Ovary (tissue), 10 donors: ENCODE measurements at regions of chr5 and their contacts with region 1.

Region 1: GRCh38 chr5:42228279-42228678 is 195.0 kb upstream of the GHR start:
- DNase-seq: no peak
- H3K4me3 ChIP-seq: no peak overlapping the region
- H3K27ac ChIP-seq: no peak overlapping the region
- H3K4me1 ChIP-seq: no peaks in the 10 kb centered on the region
- H3K27me3 ChIP-seq: no peaks in the 10 kb centered on the region
- CTCF ChIP-seq: no peak
- EP300 ChIP-seq: no peak
- POLR2A ChIP-seq: no peak

Region 2: DNA sequence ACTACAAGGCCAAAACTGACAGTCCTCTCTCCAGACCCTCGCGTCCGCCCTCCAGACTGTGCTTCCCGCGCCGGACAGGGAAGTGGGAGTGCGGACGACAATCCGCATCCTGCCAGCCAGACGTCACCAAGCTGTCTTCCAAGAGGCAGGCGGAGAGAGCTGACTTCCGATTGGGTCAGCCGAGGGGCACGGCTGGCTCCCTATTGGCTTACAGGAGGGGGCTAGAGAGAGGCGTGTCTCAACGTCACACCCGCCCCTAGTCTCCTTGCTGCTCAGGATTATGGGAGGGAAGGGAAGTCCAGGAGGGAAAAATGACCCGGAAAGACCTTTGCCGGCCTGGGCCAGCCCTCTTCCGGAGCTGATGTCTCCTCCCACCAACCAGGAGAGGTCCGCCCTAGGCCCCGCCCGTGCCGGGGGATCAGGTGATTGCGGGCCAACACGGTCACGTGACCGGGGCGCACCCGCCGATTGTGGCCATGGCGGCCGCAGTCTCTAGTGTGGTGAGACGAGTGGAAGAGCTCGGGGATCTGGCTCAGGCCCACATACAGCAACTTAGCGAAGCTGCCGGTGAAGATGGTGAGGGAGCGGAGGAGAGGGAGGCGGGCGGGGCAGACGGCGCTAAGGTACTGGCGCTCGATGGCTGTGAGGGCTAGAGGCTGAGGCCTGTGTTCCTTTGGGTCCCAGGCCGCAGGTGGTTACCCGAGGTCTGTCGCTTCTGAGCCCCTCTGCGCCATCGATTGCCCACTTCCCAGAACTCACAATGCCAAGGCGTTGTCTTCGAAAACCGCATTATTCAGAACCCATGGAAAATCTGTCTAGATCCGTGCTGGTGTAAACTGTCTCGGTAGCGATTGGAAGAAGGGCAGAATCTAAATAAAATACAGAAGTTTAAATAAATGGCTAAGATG is 324.1 kb before region 1 on chr5 and contains the start of gene RIMOC1:
- intact Hi-C with region 1: no loop called
- DNase-seq: peak; percentile 98 to 99 (median 98)
- H3K4me3 ChIP-seq: peak within 1 kb of the TSS; percentile 86
- H3K27ac ChIP-seq: peak within 1 kb of the TSS; percentile 84 to 94
- H3K4me1 ChIP-seq: peaks cover 2% of the 10 kb centered on the region
- H3K27me3 ChIP-seq: no peaks in the 10 kb centered on the region
- CTCF ChIP-seq: no peak
- EP300 ChIP-seq: no peak
- POLR2A ChIP-seq: peak; percentile 94
- total RNA-seq, gene RIMOC1: 12.2 to 35.7 (median 25.9) TPM

Region 3: DNA sequence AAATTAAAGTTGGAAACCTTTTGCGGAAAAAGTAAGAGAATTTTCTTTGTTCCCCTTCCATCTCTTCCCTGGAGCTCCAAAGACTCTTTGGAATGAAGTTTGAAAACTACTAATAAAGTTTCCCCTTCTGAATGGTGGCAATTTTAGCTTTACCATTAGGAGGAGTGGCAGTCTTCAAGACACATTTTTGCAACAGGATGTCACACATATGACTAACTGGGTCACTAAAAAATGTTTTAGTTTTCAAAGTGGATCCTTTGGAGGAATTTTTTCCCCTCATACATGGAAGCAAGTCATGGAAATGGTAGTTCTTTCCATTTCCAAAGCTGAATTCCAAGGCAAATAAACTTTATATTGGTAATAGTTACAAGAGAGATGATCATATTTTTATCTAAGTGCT is 287.6 kb before region 1 on chr5:
- intact Hi-C with region 1: no loop called
- DNase-seq: no peak
- H3K4me3 ChIP-seq: no peak overlapping the region
- H3K27ac ChIP-seq: no peak overlapping the region
- H3K4me1 ChIP-seq: no peaks in the 10 kb centered on the region
- H3K27me3 ChIP-seq: no peaks in the 10 kb centered on the region
- CTCF ChIP-seq: no peak
- EP300 ChIP-seq: no peak
- POLR2A ChIP-seq: no peak

Region 4: DNA sequence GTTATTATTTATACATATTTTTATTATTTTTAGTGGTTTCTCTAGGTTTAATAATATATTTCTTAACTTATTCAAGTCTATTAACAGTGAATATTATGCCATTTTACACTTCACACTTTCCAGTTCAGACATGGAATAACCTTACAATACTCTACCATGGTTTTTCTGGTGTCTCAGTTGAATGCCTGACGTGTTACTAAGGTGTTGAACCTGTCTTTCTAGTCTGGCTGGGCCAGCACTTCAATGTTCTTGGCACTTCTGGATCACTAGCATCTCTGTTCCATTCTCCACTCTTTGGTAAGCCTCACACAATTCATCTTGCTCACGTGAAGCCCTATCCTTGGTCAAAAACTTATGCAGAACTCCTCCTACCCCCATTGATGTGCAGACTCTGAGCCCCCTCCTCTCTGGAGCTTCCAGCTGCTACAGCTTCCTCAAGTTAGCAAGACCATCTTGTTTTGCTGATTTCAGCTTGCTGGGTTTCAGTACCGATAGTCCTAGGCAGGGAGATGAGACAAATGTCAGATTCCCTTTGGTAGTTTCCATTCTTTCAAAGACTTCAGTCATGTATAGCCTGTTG is 60.1 kb before region 1 on chr5:
- intact Hi-C with region 1: no loop called
- DNase-seq: no peak
- H3K4me3 ChIP-seq: no peak overlapping the region
- H3K27ac ChIP-seq: no peak overlapping the region
- H3K4me1 ChIP-seq: no peaks in the 10 kb centered on the region
- H3K27me3 ChIP-seq: no peaks in the 10 kb centered on the region
- CTCF ChIP-seq: no peak
- EP300 ChIP-seq: no peak
- POLR2A ChIP-seq: no peak

Region 5: GRCh38 chr5:42268630-42269029 is 40.4 kb after region 1 on chr5:
- intact Hi-C with region 1: loop called in 1 of 4 experiments (anchors 1 kb)
- DNase-seq: no peak
- H3K4me3 ChIP-seq: no peak overlapping the region
- H3K27ac ChIP-seq: no peak overlapping the region
- H3K4me1 ChIP-seq: no peaks in the 10 kb centered on the region
- H3K27me3 ChIP-seq: no peaks in the 10 kb centered on the region
- CTCF ChIP-seq: no peak
- EP300 ChIP-seq: no peak
- POLR2A ChIP-seq: no peak